ENCODE measurements at regions of chrX and their contacts with region 1.

Region 1: GRCh38 chrX:103806862-103807474 is 25.1 kb downstream of the RAB9B start:
- DNase-seq: no peak
- ATAC-seq: no peak
- H3K4me3 ChIP-seq: no peak overlapping the region
- H3K27ac ChIP-seq: no peak overlapping the region
- H3K4me1 ChIP-seq: no peaks in the 10 kb centered on the region
- H3K27me3 ChIP-seq: peaks cover 11% of the 10 kb centered on the region
- CTCF ChIP-seq: no peak
- POLR2A ChIP-seq: no peak
- RAD21 ChIP-seq: no peak

Region 2: GRCh38 chrX:103540145-103540544 is 266.8 kb before region 1 on chrX:
- CTCF ChIA-PET with region 1: no interaction called
- POLR2A ChIA-PET with region 1: no interaction called
- dilution Hi-C with region 1: no loop called
- in situ Hi-C with region 1: loop called (anchors 5 kb)
- intact Hi-C with region 1: no loop called
- DNase-seq: peak; percentile 58
- ATAC-seq: peak; percentile 72
- H3K4me3 ChIP-seq: no peak overlapping the region
- H3K27ac ChIP-seq: no peak overlapping the region
- H3K4me1 ChIP-seq: peaks cover 2% of the 10 kb centered on the region
- H3K27me3 ChIP-seq: peaks cover 6% of the 10 kb centered on the region
- CTCF ChIP-seq: no peak
- POLR2A ChIP-seq: no peak
- RAD21 ChIP-seq: no peak

Region 3: GRCh38 chrX:103697687-103698086 is 109.3 kb before region 1 on chrX:
- CTCF ChIA-PET with region 1: no interaction called
- POLR2A ChIA-PET with region 1: no interaction called
- dilution Hi-C with region 1: no loop called
- in situ Hi-C with region 1: loop called (anchors 10 kb)
- intact Hi-C with region 1: no loop called
- DNase-seq: no peak
- ATAC-seq: no peak
- H3K4me3 ChIP-seq: no peak overlapping the region
- H3K27ac ChIP-seq: no peak overlapping the region
- H3K4me1 ChIP-seq: no peaks in the 10 kb centered on the region
- H3K27me3 ChIP-seq: peaks cover 15% of the 10 kb centered on the region
- CTCF ChIP-seq: no peak
- POLR2A ChIP-seq: no peak
- RAD21 ChIP-seq: no peak